MCF 10A (cell line): ENCODE measurements at regions of chr15 and their contacts with region 1.

Region 1: DNA sequence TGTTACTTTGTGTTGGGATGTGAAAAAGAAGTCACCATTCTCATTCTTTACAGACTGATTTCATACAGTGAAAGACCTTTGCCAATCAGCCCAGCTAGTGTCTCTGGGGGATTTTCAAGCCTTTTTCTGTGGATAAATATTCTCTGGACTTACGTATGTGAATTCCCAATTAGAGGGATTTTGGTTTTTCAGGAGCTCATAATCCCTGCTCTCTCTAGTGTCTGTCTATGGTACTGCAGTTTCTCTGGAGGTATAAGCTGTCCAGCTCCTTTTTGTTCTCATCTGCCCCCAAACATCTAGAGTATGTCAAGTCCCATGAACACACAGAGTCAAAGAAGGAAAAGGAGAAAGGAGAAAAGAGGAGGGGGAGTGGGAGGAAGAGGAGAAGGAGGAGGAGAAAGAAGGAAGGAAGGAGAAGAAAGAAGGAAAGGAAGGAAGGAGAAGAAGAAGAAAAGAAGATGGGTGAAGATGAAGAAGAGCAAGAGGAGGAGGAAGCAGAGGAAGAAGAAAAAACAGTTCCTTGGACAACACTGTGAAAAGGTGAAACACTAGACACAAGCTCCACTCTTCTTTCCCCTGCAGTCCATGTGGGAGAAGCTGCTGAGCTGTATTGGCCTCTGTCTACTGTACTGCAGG is 218.6 kb downstream of the GREM1 start:
- DNase-seq: peak; percentile 48
- H3K4me3 Mint-ChIP-seq: no peak overlapping the region
- H3K27ac Mint-ChIP-seq: peak overlapping the region; percentile 7
- H3K4me1 Mint-ChIP-seq: peaks cover 5% of the 10 kb centered on the region
- H3K27me3 Mint-ChIP-seq: peaks cover 11% of the 10 kb centered on the region
- CTCF ChIP-seq: peak; percentile 73

Region 2: DNA sequence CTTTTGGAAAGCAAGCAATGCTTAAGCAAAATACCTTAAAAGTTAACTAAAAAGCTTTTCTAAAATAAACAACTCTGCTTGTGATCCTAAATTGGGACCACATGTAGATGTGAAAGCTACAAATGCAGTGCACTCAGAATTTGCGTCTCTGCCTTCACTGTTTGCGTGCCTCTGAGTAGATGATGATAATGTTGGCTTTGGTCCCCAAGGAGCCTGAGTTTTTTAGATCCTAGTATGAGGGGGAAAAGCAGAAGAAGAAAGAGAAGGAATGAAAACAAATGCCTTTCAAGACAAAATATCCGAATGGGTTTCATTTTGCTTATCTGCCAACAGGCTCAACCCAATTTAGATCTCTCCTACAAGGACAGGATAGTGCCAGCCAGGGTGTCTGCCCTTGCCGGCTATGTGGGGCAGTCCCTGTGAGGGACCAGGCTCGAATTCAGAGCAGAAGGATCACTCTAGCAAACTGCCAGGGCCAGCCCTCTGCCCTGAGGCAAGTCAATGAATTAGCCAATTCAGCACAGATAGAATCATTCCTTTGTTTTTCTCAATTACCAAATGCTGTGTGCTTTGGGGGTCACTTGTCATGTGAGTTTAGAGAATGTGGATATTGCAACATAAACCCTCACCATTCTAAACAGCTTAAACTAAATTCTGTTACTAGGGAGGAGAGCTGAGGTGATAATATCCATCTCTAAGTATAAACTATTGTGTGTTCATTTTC is 266.3 kb before region 1 on chr15:
- CTCF ChIA-PET with region 1: interaction called, 18 read pairs
- POLR2A ChIA-PET with region 1: no interaction called
- intact Hi-C with region 1: no loop called
- DNase-seq: peak; percentile 69
- H3K4me3 Mint-ChIP-seq: no peak overlapping the region
- H3K27ac Mint-ChIP-seq: no peak overlapping the region
- H3K4me1 Mint-ChIP-seq: peaks cover 8% of the 10 kb centered on the region
- H3K27me3 Mint-ChIP-seq: no peaks in the 10 kb centered on the region
- CTCF ChIP-seq: no peak

Region 3: DNA sequence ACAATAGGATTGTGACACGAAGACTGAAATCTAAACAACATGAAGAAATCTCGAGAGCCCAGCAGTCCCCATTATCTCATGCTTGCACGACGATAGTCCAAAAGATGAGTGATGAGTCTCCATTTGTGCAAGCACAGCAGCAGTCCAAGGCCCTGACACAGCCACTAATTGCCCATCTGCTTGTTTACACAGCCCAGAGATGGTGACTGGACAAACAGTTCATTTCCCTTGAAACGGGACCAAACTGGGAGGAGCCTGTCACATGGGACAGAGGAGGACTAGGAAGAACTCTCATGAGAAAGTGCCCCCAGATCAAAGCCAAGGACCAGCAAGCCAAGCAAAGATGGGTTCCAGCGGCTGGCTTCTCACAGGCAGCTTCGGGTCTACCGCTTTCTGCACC is 97.6 kb before region 1 on chr15:
- CTCF ChIA-PET with region 1: interaction called, 74 read pairs
- POLR2A ChIA-PET with region 1: interaction called, 4 read pairs
- intact Hi-C with region 1: loop called (anchors 1 kb)
- DNase-seq: peak; percentile 77
- H3K4me3 Mint-ChIP-seq: no peak overlapping the region
- H3K27ac Mint-ChIP-seq: no peak overlapping the region
- H3K4me1 Mint-ChIP-seq: no peaks in the 10 kb centered on the region
- H3K27me3 Mint-ChIP-seq: no peaks in the 10 kb centered on the region
- CTCF ChIP-seq: no peak

Region 4: DNA sequence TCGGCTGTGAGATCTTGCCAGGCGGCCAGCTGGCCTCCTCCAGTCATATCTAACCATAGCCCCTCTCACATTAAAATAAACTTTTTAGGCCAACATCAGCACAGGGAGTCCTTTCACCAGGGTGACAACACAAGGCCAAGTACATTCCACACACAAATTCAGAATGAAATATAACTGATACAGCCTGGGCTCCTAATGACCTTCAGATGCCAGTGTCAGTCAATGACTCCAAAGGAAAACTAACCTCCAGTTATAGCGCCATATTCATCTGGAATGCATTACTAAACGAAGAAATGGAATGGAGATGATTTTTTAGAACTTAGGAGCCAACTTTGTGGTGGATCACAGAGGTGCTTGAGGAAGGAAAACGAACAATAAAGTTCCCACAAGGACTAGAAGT is 13.2 kb before region 1 on chr15:
- CTCF ChIA-PET with region 1: interaction called, 11 read pairs
- POLR2A ChIA-PET with region 1: no interaction called
- intact Hi-C with region 1: no loop called
- DNase-seq: no peak
- H3K4me3 Mint-ChIP-seq: no peak overlapping the region
- H3K27ac Mint-ChIP-seq: no peak overlapping the region
- H3K4me1 Mint-ChIP-seq: no peaks in the 10 kb centered on the region
- H3K27me3 Mint-ChIP-seq: no peaks in the 10 kb centered on the region
- CTCF ChIP-seq: no peak

Region 5: DNA sequence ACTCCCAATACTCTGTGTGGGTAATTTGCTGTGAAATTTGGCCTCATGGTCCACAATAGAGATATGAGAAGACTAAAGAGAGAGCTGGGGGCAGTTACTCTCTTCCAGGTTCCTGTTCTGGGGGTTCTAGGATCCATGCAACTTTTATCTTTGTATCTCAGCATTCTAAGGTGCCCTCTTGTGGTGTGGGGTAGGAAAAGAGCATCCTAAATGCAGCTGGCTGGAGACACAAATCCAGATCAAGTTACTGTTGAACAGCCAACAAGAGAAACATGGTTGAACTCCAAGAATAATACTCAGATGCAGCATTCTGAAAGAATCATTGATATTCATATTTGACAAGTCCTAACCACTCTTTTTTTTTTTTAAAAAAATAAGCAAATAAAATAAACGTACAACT is 19.6 kb after region 1 on chr15:
- CTCF ChIA-PET with region 1: interaction called, 18 read pairs
- POLR2A ChIA-PET with region 1: no interaction called
- intact Hi-C with region 1: no loop called
- DNase-seq: peak; percentile 60
- H3K4me3 Mint-ChIP-seq: no peak overlapping the region
- H3K27ac Mint-ChIP-seq: no peak overlapping the region
- H3K4me1 Mint-ChIP-seq: peaks cover 8% of the 10 kb centered on the region
- H3K27me3 Mint-ChIP-seq: no peaks in the 10 kb centered on the region
- CTCF ChIP-seq: peak; percentile 38